ENCODE measurements at regions of chr20 and their contacts with region 1.

Region 1: DNA sequence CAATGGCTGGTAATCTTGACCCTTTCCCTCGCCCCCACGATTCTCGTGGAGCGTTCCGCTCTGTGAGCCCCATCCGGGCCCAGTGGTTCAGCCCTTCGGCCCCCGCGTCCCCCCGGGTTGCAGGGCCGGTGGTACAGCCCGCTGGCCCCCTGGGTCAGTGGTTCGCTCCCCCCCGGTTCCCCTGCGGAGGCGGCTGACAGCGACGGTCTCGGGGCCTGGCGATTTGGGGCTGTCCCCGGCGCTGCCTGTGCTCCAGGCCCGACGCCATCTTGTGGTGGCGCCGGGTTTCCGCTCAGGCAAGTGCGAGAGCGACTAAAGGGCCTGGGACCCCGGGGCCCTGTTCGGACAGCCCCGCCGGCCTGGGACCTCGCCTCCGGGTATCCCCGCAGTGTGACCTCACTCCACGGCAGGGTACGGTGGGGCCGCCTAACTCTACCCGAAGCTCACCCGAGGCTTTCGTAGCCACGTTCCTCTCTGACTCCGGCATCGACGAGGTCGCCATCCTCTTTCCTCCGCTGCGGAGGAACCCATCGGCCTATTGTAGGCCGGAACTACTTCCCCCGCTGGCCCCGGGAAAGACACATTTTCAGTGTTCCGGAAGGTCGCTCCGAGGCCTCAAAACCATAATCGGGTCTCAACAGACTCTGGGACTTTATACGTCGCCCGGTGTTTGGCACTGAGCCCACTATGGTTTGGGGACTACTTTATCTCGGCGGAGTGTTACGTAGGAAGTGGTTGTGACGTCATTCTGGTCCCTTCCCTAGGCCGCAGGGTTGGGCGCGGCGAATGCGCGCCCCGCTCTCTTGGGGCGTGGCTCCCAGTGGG is at the start of gene ZNF335:
- DNase-seq: peak; percentile 86 to 97 (median 94)
- ATAC-seq: peak; percentile 80
- H3K4me3 ChIP-seq: peak within 1 kb of the TSS; percentile 96
- H3K4me3 Mint-ChIP-seq: peak within 1 kb of the TSS; percentile 94
- H3K27ac ChIP-seq: peak within 1 kb of the TSS; percentile 99 to 100
- H3K27ac Mint-ChIP-seq: peak within 1 kb of the TSS; percentile 100
- H3K4me1 ChIP-seq: peaks cover 36% of the 10 kb centered on the region
- H3K4me1 Mint-ChIP-seq: peaks cover 28% of the 10 kb centered on the region
- H3K27me3 ChIP-seq: no peaks in the 10 kb centered on the region
- H3K27me3 Mint-ChIP-seq: peaks cover 4% of the 10 kb centered on the region
- CTCF ChIP-seq: no peak
- total RNA-seq, gene ZNF335: 67.3 to 74.6 TPM

Region 2: DNA sequence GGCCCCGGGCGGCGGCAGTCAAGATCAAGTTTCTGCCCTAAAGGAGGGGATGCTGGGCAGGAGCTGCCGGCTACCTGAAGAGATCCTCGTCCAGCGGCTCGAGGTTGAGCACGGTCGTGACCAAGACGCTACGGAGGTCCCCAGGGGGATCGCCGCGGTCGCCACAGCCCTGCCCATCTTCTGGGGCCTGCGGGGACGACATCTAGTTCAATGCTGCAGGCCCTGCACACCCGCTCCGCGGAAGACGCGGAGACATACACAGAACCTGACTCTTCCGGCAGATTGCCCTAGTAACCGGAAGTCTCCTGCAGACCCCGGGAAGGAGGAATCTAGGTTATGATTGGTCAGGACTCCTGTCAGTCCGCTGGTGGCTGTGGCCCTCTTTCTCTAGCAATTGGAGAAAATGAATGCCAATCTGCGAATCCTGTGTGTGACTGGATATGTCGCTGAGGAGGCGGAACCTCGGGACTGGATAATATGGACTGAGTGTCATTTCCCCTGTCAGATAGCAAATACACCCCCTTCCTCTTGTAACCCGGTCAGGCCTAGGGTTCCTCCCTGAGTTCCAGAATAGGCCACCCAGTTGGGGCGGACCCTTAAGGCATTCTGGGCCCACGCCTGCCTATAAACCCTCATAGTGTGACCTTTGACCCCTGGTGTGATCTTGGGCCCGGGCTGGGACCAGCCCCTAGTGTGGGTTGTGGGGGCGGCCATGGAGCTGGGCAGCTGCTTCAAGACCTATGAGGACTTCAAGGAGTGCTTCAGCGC is 114.6 kb before region 1 on chr20 and contains the starts of genes ACOT8 and ZSWIM3:
- CTCF ChIA-PET with region 1: no interaction called
- POLR2A ChIA-PET with region 1: interaction called, 9 read pairs
- intact Hi-C with region 1: loop called in 1 of 2 experiments (anchors 2 kb)
- DNase-seq: peak; percentile 80 to 100 (median 90)
- ATAC-seq: peak; percentile 98
- H3K4me3 ChIP-seq: peak within 1 kb of the TSS; percentile 100
- H3K4me3 Mint-ChIP-seq: peak within 1 kb of the TSS; percentile 96
- H3K27ac ChIP-seq: peak within 1 kb of the TSS; percentile 88 to 94
- H3K27ac Mint-ChIP-seq: peak within 1 kb of the TSS; percentile 98
- H3K4me1 ChIP-seq: peaks cover 40% of the 10 kb centered on the region
- H3K4me1 Mint-ChIP-seq: peaks cover 52% of the 10 kb centered on the region
- H3K27me3 ChIP-seq: no peaks in the 10 kb centered on the region
- H3K27me3 Mint-ChIP-seq: no peaks in the 10 kb centered on the region
- CTCF ChIP-seq: no peak
- total RNA-seq, gene ACOT8: 19.1 to 19.9 TPM
- total RNA-seq, gene ZSWIM3: 0.36 to 0.44 TPM

Region 3: DNA sequence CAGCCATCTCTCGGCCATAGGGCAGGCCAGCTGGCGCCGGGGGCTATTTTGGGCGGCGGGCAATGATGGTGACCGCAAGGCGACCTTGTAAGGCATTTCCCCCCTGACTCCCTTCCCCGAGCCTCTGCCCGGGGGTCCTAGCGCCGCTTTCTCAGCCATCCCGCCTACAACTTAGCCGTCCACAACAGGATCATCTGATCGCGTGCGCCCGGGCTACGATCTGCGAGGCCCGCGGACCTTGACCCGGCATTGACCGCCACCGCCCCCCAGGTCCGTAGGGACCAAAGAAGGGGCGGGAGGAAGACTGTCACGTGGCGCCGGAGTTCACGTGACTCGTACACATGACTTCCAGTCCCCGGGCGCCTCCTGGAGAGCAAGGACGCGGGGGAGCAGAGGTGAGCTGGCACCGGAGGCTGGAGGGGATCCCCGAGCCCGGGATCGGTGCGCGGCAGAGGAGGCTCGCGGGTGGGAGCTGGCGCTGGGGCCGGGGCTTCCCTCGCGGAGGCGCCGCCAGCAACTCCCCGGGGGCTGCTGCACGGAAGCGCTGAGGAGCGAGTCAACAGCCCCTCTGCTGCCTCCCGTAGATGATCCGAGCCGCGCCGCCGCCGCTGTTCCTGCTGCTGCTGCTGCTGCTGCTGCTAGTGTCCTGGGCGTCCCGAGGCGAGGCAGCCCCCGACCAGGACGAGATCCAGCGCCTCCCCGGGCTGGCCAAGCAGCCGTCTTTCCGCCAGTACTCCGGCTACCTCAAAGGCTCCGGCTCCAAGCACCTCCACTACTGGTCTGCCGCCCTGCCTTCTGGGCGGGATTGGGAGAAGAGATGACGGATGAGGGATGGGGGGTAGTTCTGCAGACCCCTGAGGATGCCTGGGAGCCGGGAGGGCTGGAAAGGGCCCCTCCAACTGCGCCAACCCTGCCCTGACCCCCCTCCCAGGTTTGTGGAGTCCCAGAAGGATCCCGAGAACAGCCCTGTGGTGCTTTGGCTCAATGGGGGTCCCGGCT is 80.6 kb before region 1 on chr20 and contains the starts of genes CTSA and NEURL2:
- CTCF ChIA-PET with region 1: interaction called, 6 read pairs
- POLR2A ChIA-PET with region 1: interaction called, 37 read pairs
- intact Hi-C with region 1: loop called (anchors 2 kb)
- DNase-seq: peak; percentile 64 to 92 (median 76)
- ATAC-seq: peak; percentile 79
- H3K4me3 ChIP-seq: peak within 1 kb of the TSS; percentile 93
- H3K4me3 Mint-ChIP-seq: peak within 1 kb of the TSS; percentile 96
- H3K27ac ChIP-seq: peak within 1 kb of the TSS; percentile 50 to 65
- H3K27ac Mint-ChIP-seq: peak within 1 kb of the TSS; percentile 84
- H3K4me1 ChIP-seq: peaks cover 48% of the 10 kb centered on the region
- H3K4me1 Mint-ChIP-seq: peaks cover 51% of the 10 kb centered on the region
- H3K27me3 ChIP-seq: no peaks in the 10 kb centered on the region
- H3K27me3 Mint-ChIP-seq: no peaks in the 10 kb centered on the region
- CTCF ChIP-seq: no peak
- total RNA-seq, gene CTSA: 40.3 to 42.6 TPM
- total RNA-seq, gene NEURL2: 1.5 to 2.5 TPM

Region 4: DNA sequence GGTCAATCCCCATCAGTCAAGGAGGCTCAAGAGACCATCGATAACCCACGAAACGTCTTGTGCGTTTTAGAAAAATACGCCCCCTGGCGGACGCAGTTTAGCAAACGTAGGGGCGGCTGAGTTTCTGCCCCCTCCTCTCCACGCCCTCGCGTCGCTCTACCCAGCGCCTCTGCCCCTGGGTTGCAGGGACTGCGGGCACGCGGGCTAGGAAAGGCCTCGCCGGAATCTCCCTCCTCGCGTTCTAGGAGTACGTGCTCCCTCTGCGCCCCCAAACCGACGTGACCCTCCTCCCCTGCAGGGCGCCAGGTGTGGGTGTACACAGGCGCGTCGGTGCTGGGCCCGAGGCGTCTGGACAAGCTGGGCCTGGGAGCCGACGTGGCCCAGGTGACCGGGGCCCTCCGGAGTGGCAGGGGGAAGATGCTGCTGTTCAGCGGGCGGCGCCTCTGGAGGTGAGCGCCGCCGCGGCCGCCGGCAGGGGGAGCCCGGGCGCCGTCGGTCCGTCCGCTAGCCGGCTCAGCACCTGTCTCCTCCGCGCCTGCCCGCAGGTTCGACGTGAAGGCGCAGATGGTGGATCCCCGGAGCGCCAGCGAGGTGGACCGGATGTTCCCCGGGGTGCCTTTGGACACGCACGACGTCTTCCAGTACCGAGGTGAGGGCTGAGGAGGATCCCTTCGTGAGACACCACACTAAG is 42.1 kb after region 1 on chr20:
- CTCF ChIA-PET with region 1: interaction called, 15 read pairs
- POLR2A ChIA-PET with region 1: interaction called, 5 read pairs
- intact Hi-C with region 1: loop called (anchors 5 kb)
- DNase-seq: peak; percentile 46 to 88 (median 60)
- ATAC-seq: peak; percentile 57
- H3K4me3 ChIP-seq: peak overlapping the region; percentile 43
- H3K4me3 Mint-ChIP-seq: peak overlapping the region; percentile 35
- H3K27ac ChIP-seq: no peak overlapping the region
- H3K27ac Mint-ChIP-seq: no peak overlapping the region
- H3K4me1 ChIP-seq: peaks cover 55% of the 10 kb centered on the region
- H3K4me1 Mint-ChIP-seq: peaks cover 62% of the 10 kb centered on the region
- H3K27me3 ChIP-seq: peaks cover 41 to 48% of the 10 kb centered on the region in 2 experiments
- H3K27me3 Mint-ChIP-seq: peaks cover 86% of the 10 kb centered on the region
- CTCF ChIP-seq: peak; percentile 96

Region 5: DNA sequence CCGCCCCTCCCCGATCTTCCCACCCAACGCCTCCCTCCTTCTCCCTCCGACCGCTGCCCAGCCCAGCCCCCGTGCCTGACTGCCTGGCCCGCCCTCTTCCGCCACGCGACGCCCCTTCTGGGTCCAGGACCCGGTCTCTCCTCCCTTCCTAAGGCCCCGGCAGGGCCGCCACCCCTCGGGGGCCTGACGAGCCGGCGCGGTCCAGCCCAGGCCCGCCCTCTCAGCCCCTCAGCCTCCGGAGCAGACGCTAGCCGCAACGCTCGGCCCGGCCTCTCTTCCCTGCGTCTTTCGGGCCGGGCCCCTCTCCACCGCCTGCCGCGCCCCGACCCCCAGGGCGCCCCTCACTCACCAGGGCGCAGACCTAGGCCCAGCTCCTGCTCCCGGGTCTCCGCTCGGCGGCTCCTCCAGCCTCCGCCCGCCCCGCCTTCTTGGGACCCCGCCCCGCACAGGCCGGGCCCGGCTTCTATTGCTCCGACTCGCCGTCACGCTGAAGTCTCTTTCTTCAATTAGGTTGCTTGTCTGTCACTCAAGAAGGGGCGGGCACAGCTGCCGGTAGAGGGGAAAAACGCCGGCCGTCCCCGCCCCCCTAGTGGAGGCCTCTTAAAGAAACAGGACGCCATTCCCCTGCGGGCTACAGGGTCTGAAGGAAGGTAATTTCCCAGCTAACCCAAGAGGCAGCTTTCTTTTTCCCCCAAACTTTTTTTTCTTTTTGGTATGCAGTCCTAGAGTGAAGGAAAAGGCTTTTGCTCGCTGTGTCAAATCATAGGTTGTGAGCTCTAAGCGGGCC is 434.5 kb after region 1 on chr20 and contains the start of gene ELMO2:
- CTCF ChIA-PET with region 1: interaction called, 3 read pairs
- POLR2A ChIA-PET with region 1: interaction called, 13 read pairs
- intact Hi-C with region 1: no loop called
- DNase-seq: peak; percentile 88 to 98 (median 94)
- ATAC-seq: peak; percentile 88
- H3K4me3 ChIP-seq: peak within 1 kb of the TSS; percentile 85
- H3K4me3 Mint-ChIP-seq: peak within 1 kb of the TSS; percentile 99
- H3K27ac ChIP-seq: peak within 1 kb of the TSS; percentile 76 to 92
- H3K27ac Mint-ChIP-seq: peak within 1 kb of the TSS; percentile 95
- H3K4me1 ChIP-seq: peaks cover 70% of the 10 kb centered on the region
- H3K4me1 Mint-ChIP-seq: peaks cover 74% of the 10 kb centered on the region
- H3K27me3 ChIP-seq: no peaks in the 10 kb centered on the region
- H3K27me3 Mint-ChIP-seq: no peaks in the 10 kb centered on the region
- CTCF ChIP-seq: no peak
- total RNA-seq, gene ELMO2: 85.6 TPM

Measured in CD4-positive, alpha-beta T cell (primary cell).